ENCODE measurements at regions of chr17 and their contacts with region 1.

Region 1: DNA sequence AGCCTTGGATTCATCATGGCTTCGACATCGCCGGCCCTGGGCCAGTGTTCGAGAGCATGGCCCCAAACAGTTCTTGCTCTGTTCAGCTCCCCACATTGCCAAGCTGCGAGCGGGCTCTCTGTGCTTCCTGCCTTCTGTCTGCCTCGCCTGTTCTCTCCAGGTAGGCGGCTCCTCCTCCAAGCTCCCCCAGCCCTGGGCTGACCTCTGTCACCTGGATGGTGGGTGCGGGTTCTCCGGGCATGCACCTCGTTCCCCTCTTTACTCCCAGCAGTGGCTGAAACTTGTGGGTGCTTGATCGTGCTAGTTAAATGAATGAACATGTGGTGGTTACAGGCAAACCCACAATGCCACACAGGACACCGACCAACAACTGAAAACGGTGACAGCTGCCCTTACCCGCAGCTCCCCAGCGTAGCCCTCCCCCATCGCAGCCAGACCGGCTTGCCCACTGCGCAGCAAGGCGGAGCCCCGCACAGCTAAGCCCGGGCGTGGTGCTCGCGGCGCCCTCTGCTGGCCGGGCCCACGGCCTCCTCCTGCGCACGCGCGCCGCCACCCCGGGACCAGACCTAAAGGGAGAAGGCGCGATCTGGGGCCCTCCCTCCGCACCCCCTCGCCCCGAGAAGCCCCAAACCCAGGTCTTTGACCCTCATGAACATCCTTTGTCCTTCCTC is 23.0 kb upstream of the EIF1 start:
- DNase-seq: peak; percentile 92
- CTCF ChIP-seq: peak; percentile 99

Region 2: DNA sequence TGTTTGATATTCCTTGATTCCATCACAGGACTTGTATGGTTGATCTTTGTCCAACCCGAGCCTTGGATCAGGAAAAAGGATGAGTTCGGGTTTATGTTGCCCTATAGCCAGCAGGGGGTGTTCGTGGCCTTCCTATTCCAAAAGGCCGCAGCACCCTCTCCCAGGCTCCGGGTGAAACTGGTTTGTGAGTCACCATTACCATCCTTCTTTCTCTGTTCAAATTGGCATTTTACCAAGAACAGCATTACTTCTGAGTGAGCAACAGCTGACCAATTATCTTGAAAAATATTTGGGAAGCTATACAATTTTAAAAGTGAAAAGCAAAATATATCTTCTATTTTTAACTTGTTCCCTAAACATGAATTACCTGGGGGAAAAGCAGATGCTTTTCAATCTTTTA is 756.4 kb before region 1 on chr17:
- in situ Hi-C with region 1: loop called (anchors 25 kb)
- DNase-seq: peak; percentile 53
- CTCF ChIP-seq: peak; percentile 68

Measured in GM13977 (cell line).